Posterior vena cava (tissue), 2 donors: ENCODE measurements at regions of chr5 and their contacts with region 1.

Region 1: GRCh38 chr5:61290791-61291210 is 41.3 kb upstream of the ZSWIM6 start:
- DNase-seq: no peak

Region 2: DNA sequence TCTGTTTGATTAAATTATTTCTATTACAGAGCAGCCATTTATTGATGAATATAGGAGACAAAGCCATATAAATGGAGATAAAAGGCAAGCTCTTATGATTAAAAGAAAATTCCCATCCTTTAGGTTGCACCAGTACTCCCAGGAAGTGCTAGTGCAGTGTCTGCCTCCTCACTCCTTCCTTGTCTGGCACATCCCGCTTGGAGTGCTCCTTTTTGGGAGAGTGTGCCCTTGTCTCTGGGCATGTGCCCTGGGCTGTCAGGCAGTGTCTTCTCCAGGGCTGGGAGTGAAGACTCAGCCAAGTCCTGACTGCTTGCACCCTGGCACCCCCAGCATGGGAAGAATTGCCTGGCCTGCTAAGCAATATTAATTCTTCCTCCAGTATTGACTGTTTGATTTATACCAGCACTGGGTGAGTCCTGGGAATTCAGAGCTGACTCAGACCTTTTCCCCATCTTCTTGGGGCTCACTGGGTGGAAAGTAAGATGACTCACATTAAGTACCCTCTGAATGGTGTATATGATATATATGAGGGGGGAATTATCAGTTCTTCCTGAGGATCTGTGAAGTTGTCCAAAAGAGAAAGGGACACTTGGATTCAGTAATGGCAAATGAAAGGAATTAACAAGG is 103.4 kb after region 1 on chr5:
- intact Hi-C with region 1: loop called in 1 of 2 experiments (anchors 5 kb)
- DNase-seq: no peak